ENCODE measurements at regions of chr5 and their contacts with region 1.

Region 1: GRCh38 chr5:43484106-43484849 is 613 bp upstream of the TMEM267 start:
- DNase-seq: peak; percentile 74 to 92 (median 82)
- ATAC-seq: peak; percentile 70
- H3K4me3 ChIP-seq: peak overlapping the region; percentile 77
- H3K4me3 Mint-ChIP-seq: peak overlapping the region; percentile 93
- H3K27ac ChIP-seq: peak overlapping the region; percentile 95
- H3K27ac Mint-ChIP-seq: peak overlapping the region; percentile 99
- H3K4me1 ChIP-seq: peaks cover 18% of the 10 kb centered on the region
- H3K4me1 Mint-ChIP-seq: peaks cover 61% of the 10 kb centered on the region
- H3K27me3 ChIP-seq: no peaks in the 10 kb centered on the region
- H3K27me3 Mint-ChIP-seq: no peaks in the 10 kb centered on the region
- CTCF ChIP-seq: peak; percentile 83

Region 2: GRCh38 chr5:41903892-41904799 is 1580.1 kb before region 1 on chr5 and contains the start of gene RIMOC1:
- CTCF ChIA-PET with region 1: no interaction called
- POLR2A ChIA-PET with region 1: interaction called, 27 read pairs
- intact Hi-C with region 1: loop called in 1 of 2 experiments (anchors 10 kb)
- DNase-seq: peak; percentile 93 to 99 (median 96)
- ATAC-seq: peak; percentile 85
- H3K4me3 ChIP-seq: peak within 1 kb of the TSS; percentile 86
- H3K4me3 Mint-ChIP-seq: peak within 1 kb of the TSS; percentile 98
- H3K27ac ChIP-seq: peak within 1 kb of the TSS; percentile 89 to 90
- H3K27ac Mint-ChIP-seq: peak within 1 kb of the TSS; percentile 99
- H3K4me1 ChIP-seq: peaks cover 20% of the 10 kb centered on the region
- H3K4me1 Mint-ChIP-seq: peaks cover 46% of the 10 kb centered on the region
- H3K27me3 ChIP-seq: no peaks in the 10 kb centered on the region
- H3K27me3 Mint-ChIP-seq: no peaks in the 10 kb centered on the region
- CTCF ChIP-seq: no peak
- total RNA-seq, gene RIMOC1: 9.3 to 10.3 TPM

Region 3: DNA sequence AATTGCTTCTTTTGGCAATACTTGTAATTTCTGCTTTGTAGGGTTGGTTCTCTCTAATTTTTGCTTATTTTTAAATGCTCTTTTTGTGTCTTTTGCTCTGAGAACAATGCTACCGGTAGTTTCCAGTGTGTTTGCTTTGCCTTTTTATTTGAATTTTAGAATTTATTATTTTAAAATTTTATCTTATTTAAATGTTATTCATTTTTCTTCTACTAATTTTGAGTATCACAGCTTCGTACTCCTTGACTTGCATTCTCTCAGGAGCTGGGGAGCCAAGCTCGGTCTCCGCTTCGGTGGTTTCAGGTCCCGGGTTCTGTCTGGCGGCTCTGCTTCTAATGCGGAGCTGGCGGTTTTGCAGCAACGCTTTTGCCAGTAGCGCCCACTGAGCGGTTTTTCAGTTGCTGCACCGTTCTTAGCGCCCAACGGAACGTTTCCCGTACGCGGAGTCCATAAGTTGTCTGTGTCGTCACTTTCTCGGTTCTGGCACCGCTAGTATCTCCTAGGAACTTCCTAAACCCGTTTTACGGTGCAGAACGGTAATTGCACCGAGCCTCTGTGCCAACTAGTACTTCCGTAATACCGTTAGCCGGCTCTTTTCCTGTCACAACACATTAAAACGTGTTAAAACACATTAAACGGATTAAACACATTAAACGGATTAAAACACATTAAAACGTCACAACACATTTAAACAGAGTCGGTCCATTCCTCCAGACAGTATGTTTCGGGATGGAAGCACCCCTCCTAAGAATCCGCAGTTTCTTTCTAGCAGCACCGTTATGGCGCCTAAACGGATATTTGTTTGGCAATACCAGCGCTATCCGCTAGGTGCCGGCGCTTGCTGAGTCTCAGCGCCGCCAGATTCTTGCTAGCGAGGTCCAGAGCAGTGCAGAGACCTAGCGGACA is 489.8 kb before region 1 on chr5:
- CTCF ChIA-PET with region 1: no interaction called
- POLR2A ChIA-PET with region 1: interaction called, 107 read pairs
- intact Hi-C with region 1: loop called in 1 of 2 experiments (anchors 10 kb)
- DNase-seq: peak; percentile 81 to 94 (median 84)
- ATAC-seq: peak; percentile 59
- H3K4me3 ChIP-seq: peak overlapping the region; percentile 80
- H3K4me3 Mint-ChIP-seq: peak overlapping the region; percentile 100
- H3K27ac ChIP-seq: peak overlapping the region; percentile 93 to 98
- H3K27ac Mint-ChIP-seq: peak overlapping the region; percentile 99
- H3K4me1 ChIP-seq: peaks cover 46% of the 10 kb centered on the region
- H3K4me1 Mint-ChIP-seq: peaks cover 48% of the 10 kb centered on the region
- H3K27me3 ChIP-seq: no peaks in the 10 kb centered on the region
- H3K27me3 Mint-ChIP-seq: peaks cover 9% of the 10 kb centered on the region
- CTCF ChIP-seq: peak; percentile 85

Region 4: DNA sequence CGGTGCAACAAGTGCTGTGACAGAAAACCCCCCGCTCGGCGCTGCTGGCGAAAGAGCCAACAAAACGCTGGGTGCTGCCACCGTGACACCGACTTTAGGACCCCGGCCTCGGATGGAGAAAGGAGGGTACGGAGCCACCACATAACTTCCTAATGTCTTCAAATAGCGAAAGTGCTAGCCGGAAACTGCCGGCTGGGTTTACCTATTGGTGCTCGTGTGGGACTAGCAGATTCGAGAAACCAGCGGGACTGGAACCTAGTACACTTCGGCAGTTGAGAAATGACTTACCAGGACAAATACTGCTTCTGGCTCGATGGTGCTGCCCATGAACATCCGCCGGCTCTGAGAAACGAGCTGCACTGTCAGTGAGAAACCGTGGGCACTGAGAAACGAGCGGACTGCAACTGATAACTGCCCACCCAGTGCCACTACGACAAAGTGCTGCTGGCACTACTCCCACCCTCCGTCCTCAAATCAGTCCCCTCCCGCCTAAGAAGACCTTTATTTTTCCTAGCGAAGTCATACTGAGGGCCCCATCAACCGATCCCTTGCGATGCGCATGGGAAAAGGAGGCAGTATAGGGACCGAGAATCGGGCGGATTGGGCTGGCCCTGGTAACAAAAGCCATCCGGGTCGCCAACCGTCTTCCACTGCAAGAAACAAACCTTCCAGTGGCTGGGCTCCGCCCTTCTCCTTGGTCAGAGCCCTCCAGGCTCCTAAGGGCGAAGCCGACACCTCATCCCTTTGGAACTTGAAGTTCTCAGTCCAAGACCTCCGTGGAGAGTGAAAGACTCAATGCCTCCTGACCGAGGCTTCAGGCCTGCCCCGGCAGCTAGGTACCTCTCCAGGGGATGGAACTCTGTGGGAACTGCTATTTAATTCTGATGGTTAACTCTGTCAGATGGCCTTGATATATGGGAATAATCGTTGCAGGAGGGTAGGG is 417.2 kb before region 1 on chr5:
- CTCF ChIA-PET with region 1: interaction called, 5 read pairs
- POLR2A ChIA-PET with region 1: interaction called, 77 read pairs
- intact Hi-C with region 1: loop called (anchors 5 kb)
- DNase-seq: peak; percentile 84 to 94 (median 90)
- ATAC-seq: peak; percentile 45
- H3K4me3 ChIP-seq: peak overlapping the region; percentile 78
- H3K4me3 Mint-ChIP-seq: peak overlapping the region; percentile 97
- H3K27ac ChIP-seq: peak overlapping the region; percentile 97 to 98
- H3K27ac Mint-ChIP-seq: peak overlapping the region; percentile 96
- H3K4me1 ChIP-seq: peaks cover 55% of the 10 kb centered on the region
- H3K4me1 Mint-ChIP-seq: peaks cover 49% of the 10 kb centered on the region
- H3K27me3 ChIP-seq: no peaks in the 10 kb centered on the region
- H3K27me3 Mint-ChIP-seq: no peaks in the 10 kb centered on the region
- CTCF ChIP-seq: no peak

Region 5: GRCh38 chr5:43389679-43390329 is 94.5 kb before region 1 on chr5:
- CTCF ChIA-PET with region 1: interaction called, 12 read pairs
- POLR2A ChIA-PET with region 1: interaction called, 34 read pairs
- intact Hi-C with region 1: loop called (anchors 5 kb)
- DNase-seq: peak in 12 of 14 experiments; percentile 6 to 79 (median 18)
- ATAC-seq: peak; percentile 82
- H3K4me3 ChIP-seq: no peak overlapping the region
- H3K4me3 Mint-ChIP-seq: no peak overlapping the region
- H3K27ac ChIP-seq: no peak overlapping the region
- H3K27ac Mint-ChIP-seq: peak overlapping the region; percentile 28
- H3K4me1 ChIP-seq: no peaks in the 10 kb centered on the region
- H3K4me1 Mint-ChIP-seq: peaks cover 27% of the 10 kb centered on the region
- H3K27me3 ChIP-seq: no peaks in the 10 kb centered on the region
- H3K27me3 Mint-ChIP-seq: no peaks in the 10 kb centered on the region
- CTCF ChIP-seq: peak; percentile 85

Region 6: DNA sequence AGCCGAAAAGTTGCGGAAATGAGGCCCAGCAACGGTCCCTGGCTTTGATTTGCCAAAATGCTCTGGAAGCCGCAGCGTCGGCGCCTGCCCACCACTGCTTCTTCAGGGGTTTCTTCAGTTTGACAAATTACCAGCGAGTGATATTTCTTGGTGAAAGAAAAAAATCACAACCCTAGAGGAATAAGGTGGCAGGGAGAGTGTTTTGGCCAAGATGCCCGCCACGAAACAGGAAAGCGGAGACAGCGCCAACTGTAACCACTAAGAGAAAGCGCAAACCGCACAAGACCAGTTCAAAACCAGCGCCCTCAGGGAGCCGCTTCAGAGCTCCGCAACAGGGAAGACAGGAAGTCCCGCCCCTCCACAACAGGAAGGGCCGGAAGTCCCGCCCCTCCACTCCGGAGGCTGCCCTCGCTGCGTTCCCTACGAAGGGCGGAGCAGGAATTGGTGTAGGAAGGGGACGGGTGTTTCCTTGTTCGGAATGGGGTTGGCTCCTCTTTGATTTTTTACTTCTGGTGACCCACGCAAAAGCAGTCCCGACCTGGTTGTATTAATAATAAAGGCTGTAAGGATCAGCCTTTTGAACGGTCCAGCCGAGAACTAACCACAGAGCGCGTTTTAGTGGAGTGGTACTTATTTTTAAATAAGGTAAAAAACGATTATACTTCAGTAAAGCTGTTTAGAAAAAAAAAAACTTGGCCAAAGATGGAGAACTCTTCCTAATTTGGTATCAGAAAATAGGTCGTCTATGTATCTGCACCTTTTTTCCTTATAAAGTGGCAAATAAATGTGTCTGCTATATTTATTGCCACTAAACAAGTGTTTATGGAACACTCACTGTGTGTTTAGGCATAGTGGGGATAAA is 30.8 kb after region 1 on chr5 and contains the start of gene C5orf34:
- CTCF ChIA-PET with region 1: interaction called, 30 read pairs
- POLR2A ChIA-PET with region 1: interaction called, 101 read pairs
- intact Hi-C with region 1: loop called (anchors 1 to 2 kb)
- DNase-seq: peak; percentile 88 to 98 (median 93)
- ATAC-seq: peak; percentile 87
- H3K4me3 ChIP-seq: peak within 1 kb of the TSS; percentile 63
- H3K4me3 Mint-ChIP-seq: peak within 1 kb of the TSS; percentile 92
- H3K27ac ChIP-seq: peak within 1 kb of the TSS; percentile 75 to 92
- H3K27ac Mint-ChIP-seq: peak within 1 kb of the TSS; percentile 92
- H3K4me1 ChIP-seq: peaks cover 10% of the 10 kb centered on the region
- H3K4me1 Mint-ChIP-seq: peaks cover 29% of the 10 kb centered on the region
- H3K27me3 ChIP-seq: no peaks in the 10 kb centered on the region
- H3K27me3 Mint-ChIP-seq: no peaks in the 10 kb centered on the region
- CTCF ChIP-seq: no peak
- total RNA-seq, gene C5orf34: 0.88 to 1.2 TPM

Region 7: GRCh38 chr5:43631182-43631910 is 147.1 kb after region 1 on chr5:
- CTCF ChIA-PET with region 1: no interaction called
- POLR2A ChIA-PET with region 1: interaction called, 13 read pairs
- intact Hi-C with region 1: no loop called
- DNase-seq: peak in 9 of 14 experiments; percentile 2 to 71 (median 12)
- ATAC-seq: peak; percentile 84
- H3K4me3 ChIP-seq: no peak overlapping the region
- H3K4me3 Mint-ChIP-seq: no peak overlapping the region
- H3K27ac ChIP-seq: no peak overlapping the region
- H3K27ac Mint-ChIP-seq: no peak overlapping the region
- H3K4me1 ChIP-seq: no peaks in the 10 kb centered on the region
- H3K4me1 Mint-ChIP-seq: peaks cover 31% of the 10 kb centered on the region
- H3K27me3 ChIP-seq: no peaks in the 10 kb centered on the region
- H3K27me3 Mint-ChIP-seq: no peaks in the 10 kb centered on the region
- CTCF ChIP-seq: peak; percentile 62

Region 8: DNA sequence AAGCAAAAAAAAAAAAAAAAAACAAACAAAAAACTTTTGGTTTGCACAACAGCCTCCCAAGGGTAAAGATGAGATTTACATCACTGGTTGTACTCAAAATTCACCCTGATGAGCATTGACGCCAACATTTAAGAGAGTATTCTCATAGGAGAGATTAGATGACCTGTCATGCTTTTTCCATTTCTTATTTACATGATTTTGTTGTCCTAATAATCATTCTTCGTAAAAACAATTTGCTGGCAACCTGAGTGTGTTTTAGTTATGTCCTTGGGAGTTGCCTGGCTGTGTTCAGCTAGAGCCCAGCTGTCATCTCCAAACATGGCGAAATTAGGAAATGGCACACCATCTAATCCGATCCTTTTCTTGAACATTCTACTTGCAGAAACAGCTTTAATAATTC is 1138.1 kb after region 1 on chr5:
- CTCF ChIA-PET with region 1: no interaction called
- POLR2A ChIA-PET with region 1: no interaction called
- intact Hi-C with region 1: no loop called
- DNase-seq: no peak
- ATAC-seq: no peak
- H3K4me3 ChIP-seq: no peak overlapping the region
- H3K4me3 Mint-ChIP-seq: no peak overlapping the region
- H3K27ac ChIP-seq: no peak overlapping the region
- H3K27ac Mint-ChIP-seq: no peak overlapping the region
- H3K4me1 ChIP-seq: no peaks in the 10 kb centered on the region
- H3K4me1 Mint-ChIP-seq: no peaks in the 10 kb centered on the region
- H3K27me3 ChIP-seq: no peaks in the 10 kb centered on the region
- H3K27me3 Mint-ChIP-seq: no peaks in the 10 kb centered on the region
- CTCF ChIP-seq: no peak

Measured in CD4-positive, alpha-beta T cell (primary cell).